ENCODE measurements at regions of chr1 and their contacts with region 1.

Region 1: GRCh38 chr1:228734881-228735801 is at the start of gene RHOU:
- DNase-seq: peak; percentile 86 to 94 (median 93)
- ATAC-seq: peak; percentile 92 to 93
- H3K4me3 ChIP-seq: peak within 1 kb of the TSS; percentile 79
- H3K27ac ChIP-seq: peak within 1 kb of the TSS; percentile 78
- H3K4me1 ChIP-seq: no peaks in the 10 kb centered on the region
- H3K27me3 ChIP-seq: no peaks in the 10 kb centered on the region
- total RNA-seq, gene RHOU: 8.1 to 15.1 (median 12.6) TPM

Region 2: DNA sequence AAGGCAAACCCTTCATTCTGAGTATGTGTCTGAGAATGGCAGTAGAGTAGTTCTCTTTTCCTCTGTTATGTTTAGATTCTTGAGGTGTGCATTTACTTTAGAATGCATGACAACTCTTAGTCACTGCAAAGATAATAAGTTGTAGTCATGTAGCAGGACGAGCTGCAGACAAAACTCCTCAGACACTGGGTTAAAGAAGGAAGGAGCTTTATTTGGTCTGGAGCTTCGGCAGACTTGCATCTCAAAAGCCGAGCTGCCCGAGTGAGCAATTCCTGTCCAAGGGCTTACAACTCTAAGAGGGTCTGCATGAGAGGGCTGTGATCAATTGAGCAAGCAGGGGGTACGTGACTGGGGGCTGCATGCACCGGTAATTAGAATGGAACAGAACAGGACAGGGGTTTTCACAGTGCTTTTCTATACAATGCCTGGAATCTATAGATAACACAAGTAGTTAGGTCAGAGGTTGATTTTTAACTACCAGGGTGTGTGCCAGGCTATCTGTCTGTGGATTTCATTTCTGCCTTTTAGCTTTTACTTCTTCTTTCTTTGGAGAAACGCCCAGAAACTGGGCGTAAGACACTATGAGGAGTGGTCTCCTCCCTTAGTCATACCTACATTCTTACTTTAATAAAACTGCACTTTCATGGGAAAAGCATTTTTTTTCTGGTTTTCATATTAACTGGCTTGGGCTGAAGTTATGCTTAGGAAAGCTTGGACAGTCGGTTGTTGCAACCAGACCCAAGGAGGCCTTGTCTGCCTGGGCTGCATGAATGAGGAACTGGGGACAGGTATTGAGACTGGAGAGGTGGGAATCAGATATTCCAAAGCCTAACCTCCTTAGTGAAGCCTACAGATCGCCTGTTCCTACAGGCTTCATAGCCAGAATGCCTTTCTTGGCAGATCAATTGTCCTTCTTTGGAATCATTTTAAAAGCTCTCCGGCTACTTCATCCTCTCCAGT is 115.3 kb after region 1 on chr1:
- intact Hi-C with region 1: loop called in 1 of 4 experiments (anchors 5 kb)
- DNase-seq: no peak
- ATAC-seq: no peak
- H3K4me3 ChIP-seq: no peak overlapping the region
- H3K27ac ChIP-seq: no peak overlapping the region
- H3K4me1 ChIP-seq: no peaks in the 10 kb centered on the region
- H3K27me3 ChIP-seq: no peaks in the 10 kb centered on the region

Region 3: DNA sequence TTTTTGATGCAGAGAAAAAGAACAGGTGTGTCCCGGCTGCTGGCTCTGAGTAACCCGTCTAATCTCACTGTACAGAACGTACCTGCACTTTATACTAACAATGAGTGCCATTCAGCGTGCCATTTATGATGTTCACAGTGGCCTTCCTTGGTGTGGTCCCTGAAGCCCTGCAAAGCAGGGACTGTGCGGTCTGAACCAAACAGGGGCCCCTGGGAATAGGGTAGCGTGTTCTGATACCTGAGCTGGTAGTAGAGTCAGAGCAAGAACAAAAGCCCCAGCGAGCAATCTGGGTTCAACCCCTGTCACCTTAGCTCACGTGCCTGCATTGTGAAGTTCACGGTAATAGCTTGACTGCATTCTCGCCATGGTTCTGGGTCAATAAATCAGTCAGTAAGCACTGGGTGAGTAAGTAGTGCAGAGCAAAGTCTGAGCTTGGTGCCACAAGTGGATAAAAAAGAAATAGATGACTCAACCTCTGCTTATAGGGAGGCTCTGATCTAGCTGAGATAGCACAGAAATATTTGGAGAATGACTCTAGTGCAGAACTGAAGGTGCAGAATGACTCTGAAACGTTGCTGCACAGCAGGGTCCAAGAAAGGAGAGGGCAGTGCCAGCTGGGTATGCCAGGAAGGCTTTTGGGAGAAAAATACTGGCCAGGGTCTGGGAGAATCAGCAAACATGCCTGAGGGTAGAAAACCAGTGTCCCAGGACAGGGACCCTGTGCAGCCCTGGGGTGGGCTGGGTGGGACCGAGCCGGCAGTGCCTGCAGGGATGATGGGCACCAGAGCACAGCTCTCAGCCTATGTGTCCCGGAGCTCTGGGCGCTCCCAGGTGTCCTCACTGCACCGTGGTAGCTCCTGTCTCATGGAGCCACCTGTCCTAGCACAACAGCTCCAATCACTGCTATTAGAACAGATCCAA is 126.0 kb after region 1 on chr1:
- intact Hi-C with region 1: no loop called
- DNase-seq: no peak
- ATAC-seq: no peak
- H3K4me3 ChIP-seq: no peak overlapping the region
- H3K27ac ChIP-seq: no peak overlapping the region
- H3K4me1 ChIP-seq: peaks cover 2% of the 10 kb centered on the region
- H3K27me3 ChIP-seq: no peaks in the 10 kb centered on the region

Region 4: DNA sequence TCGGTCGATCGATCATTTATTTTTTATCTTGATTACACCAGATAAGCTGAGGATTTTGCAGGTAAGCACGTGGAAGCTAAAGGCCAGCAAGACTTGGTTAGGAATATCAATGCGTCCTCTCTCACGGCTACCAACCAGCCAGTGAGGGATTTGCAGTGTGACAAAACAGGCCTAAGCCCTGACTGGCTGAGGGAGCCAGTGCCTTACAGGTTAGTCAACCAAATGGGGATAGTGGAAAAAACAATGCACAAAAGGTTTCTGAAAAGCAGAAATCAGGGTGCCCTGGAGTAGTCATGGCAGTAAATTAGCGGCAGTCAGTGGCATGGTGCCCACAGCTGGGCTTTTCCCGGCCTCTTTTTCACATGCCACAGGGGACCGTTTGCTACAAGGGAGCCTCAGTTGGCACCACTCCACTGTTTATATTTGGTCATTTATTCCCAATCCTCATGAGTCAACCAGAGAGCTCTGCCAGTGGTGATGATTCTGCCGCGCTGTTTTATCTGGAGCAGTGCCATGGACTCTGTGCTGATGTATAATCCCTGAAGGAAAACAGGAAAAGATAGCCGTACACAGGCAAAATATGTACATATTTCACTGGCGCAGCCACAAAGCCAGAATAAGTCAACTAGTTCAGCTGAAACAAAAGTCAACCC is 167.8 kb after region 1 on chr1:
- intact Hi-C with region 1: loop called in 2 of 4 experiments (anchors 10 kb)
- DNase-seq: peak; percentile 86 to 92 (median 88)
- ATAC-seq: peak; percentile 86 to 92
- H3K4me3 ChIP-seq: no peak overlapping the region
- H3K27ac ChIP-seq: no peak overlapping the region
- H3K4me1 ChIP-seq: peaks cover 4% of the 10 kb centered on the region
- H3K27me3 ChIP-seq: no peaks in the 10 kb centered on the region

Region 5: DNA sequence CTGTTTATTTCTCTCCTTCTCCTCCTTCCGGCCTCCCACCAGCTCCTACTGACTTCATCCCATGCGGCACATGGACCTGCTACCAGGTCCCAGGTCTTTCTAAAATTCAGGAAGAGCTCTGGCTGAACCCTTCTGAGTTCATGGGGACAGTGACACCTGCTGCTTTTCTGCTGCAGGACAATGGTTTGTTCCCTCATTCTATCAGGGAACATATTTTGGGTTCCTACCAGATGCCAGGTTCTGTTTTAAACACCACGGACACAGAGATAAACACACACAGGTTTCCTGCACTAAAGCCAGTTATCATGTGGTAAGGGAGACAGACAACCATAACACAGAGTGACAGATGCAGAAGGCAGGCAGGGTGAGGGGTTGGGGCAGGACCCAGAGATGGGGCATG is 421.7 kb after region 1 on chr1:
- intact Hi-C with region 1: loop called in 2 of 4 experiments (anchors 5 kb)
- DNase-seq: peak in 2 of 3 donors; percentile 44 to 64
- ATAC-seq: peak; percentile 71 to 74
- H3K4me3 ChIP-seq: no peak overlapping the region
- H3K27ac ChIP-seq: no peak overlapping the region
- H3K4me1 ChIP-seq: no peaks in the 10 kb centered on the region
- H3K27me3 ChIP-seq: no peaks in the 10 kb centered on the region

Region 6: GRCh38 chr1:229221104-229222019 is 486.2 kb after region 1 on chr1:
- intact Hi-C with region 1: loop called in 3 of 4 experiments (anchors 5 to 10 kb)
- DNase-seq: no peak
- ATAC-seq: peak; percentile 50 to 82
- H3K4me3 ChIP-seq: no peak overlapping the region
- H3K27ac ChIP-seq: no peak overlapping the region
- H3K4me1 ChIP-seq: peaks cover 4% of the 10 kb centered on the region
- H3K27me3 ChIP-seq: no peaks in the 10 kb centered on the region

Region 7: DNA sequence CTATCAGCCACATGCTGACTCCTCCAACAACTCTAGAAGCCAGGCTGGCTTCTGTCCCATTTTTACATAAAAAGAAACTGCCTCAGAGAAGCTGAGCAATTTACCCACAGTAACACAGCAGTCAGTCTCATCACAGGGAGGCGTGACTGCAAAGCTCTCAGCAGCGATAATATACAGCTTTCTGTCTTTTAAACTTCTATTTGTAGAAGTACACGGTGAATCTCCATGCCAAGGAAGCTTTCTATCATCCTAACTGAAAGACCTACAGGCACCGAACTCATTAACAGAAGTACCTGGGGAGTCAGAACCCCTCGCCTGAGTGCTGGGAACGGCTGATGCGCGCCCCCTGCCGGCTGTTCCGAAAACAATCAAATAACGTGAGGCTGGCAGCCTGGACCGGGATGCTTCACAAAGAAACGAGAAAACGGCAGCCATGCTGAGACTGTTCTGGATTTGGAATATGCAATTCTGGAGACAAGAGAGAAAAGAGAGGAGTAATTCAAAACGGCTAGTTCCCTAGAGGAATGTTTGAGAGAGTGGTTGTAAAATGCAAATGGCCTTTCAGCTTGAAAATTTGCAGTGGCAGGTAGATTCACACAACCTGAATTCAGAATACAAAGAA is 492.3 kb after region 1 on chr1:
- intact Hi-C with region 1: loop called in 3 of 4 experiments (anchors 5 to 10 kb)
- DNase-seq: peak; percentile 84 to 92 (median 91)
- ATAC-seq: peak; percentile 18 to 50
- H3K4me3 ChIP-seq: no peak overlapping the region
- H3K27ac ChIP-seq: no peak overlapping the region
- H3K4me1 ChIP-seq: peaks cover 7% of the 10 kb centered on the region
- H3K27me3 ChIP-seq: no peaks in the 10 kb centered on the region